ENCODE measurements at regions of chr4 and their contacts with region 1.

Region 1: GRCh38 chr4:11428899-11429698 is 405 bp upstream of the HS3ST1 start:
- DNase-seq: peak; percentile 72
- ATAC-seq: peak; percentile 90
- H3K4me3 Mint-ChIP-seq: peak overlapping the region; percentile 91
- H3K27ac Mint-ChIP-seq: peak overlapping the region; percentile 80
- H3K4me1 Mint-ChIP-seq: peaks cover 83% of the 10 kb centered on the region
- H3K27me3 Mint-ChIP-seq: peaks cover 2% of the 10 kb centered on the region
- CTCF ChIP-seq: no peak

Region 2: DNA sequence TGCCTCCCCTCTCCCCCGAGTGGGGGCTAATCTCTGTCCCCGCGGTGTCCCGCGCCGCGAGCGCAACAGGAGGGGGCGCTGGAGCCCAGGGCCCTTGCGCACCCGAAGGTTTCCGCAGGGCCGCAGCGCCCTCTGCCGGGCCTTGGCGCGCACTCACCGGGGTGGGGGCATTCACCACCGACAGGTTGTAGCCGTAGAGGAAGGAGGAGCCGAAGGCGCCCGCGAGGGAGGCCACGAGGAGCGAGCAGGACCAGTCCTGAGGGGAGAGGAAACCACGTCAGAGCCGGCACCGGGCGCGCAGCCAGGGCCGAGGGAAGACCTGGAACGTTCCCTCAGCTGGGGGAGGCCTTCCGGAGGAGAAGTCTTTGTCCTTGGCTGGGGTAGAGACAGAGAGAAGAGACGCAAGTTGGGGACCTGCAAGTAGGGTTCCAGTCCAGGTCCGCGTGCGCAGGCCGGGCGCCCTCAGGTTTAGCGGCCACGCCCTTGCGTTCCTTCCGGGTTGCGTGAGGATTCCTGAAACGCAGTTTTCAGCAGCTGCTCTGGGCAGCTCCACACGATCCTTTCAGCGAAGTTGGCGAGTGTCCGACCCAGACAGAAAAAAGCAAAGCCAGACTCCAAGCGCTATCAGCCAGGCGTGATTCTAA is 1410.2 kb before region 1 on chr4:
- CTCF ChIA-PET with region 1: no interaction called
- POLR2A ChIA-PET with region 1: no interaction called
- intact Hi-C with region 1: loop called (anchors 10 kb)
- DNase-seq: peak; percentile 85
- ATAC-seq: peak; percentile 99
- H3K4me3 Mint-ChIP-seq: peak overlapping the region; percentile 90
- H3K27ac Mint-ChIP-seq: peak overlapping the region; percentile 88
- H3K4me1 Mint-ChIP-seq: peaks cover 37% of the 10 kb centered on the region
- H3K27me3 Mint-ChIP-seq: no peaks in the 10 kb centered on the region
- CTCF ChIP-seq: peak; percentile 69

Region 3: GRCh38 chr4:10582059-10582686 is 846.9 kb before region 1 on chr4:
- CTCF ChIA-PET with region 1: interaction called, 21 read pairs
- POLR2A ChIA-PET with region 1: interaction called, 3 read pairs
- intact Hi-C with region 1: loop called (anchors 1 kb)
- DNase-seq: no peak
- ATAC-seq: no peak
- H3K4me3 Mint-ChIP-seq: no peak overlapping the region
- H3K27ac Mint-ChIP-seq: no peak overlapping the region
- H3K4me1 Mint-ChIP-seq: peaks cover 25% of the 10 kb centered on the region
- H3K27me3 Mint-ChIP-seq: no peaks in the 10 kb centered on the region
- CTCF ChIP-seq: no peak

Region 4: GRCh38 chr4:10730590-10730989 is 698.5 kb before region 1 on chr4:
- CTCF ChIA-PET with region 1: no interaction called
- POLR2A ChIA-PET with region 1: no interaction called
- intact Hi-C with region 1: loop called (anchors 5 kb)
- DNase-seq: no peak
- ATAC-seq: no peak
- H3K4me3 Mint-ChIP-seq: no peak overlapping the region
- H3K27ac Mint-ChIP-seq: no peak overlapping the region
- H3K4me1 Mint-ChIP-seq: peaks cover 65% of the 10 kb centered on the region
- H3K27me3 Mint-ChIP-seq: no peaks in the 10 kb centered on the region
- CTCF ChIP-seq: no peak

Region 5: GRCh38 chr4:11098461-11098860 is 330.6 kb before region 1 on chr4:
- CTCF ChIA-PET with region 1: no interaction called
- POLR2A ChIA-PET with region 1: no interaction called
- intact Hi-C with region 1: loop called (anchors 1 kb)
- DNase-seq: no peak
- ATAC-seq: peak; percentile 70
- H3K4me3 Mint-ChIP-seq: peak overlapping the region; percentile 57
- H3K27ac Mint-ChIP-seq: peak overlapping the region; percentile 68
- H3K4me1 Mint-ChIP-seq: peaks cover 73% of the 10 kb centered on the region
- H3K27me3 Mint-ChIP-seq: no peaks in the 10 kb centered on the region
- CTCF ChIP-seq: no peak

Region 6: GRCh38 chr4:11720292-11720691 is 291.2 kb after region 1 on chr4:
- CTCF ChIA-PET with region 1: no interaction called
- POLR2A ChIA-PET with region 1: no interaction called
- intact Hi-C with region 1: loop called (anchors 2 kb)
- DNase-seq: no peak
- ATAC-seq: no peak
- H3K4me3 Mint-ChIP-seq: no peak overlapping the region
- H3K27ac Mint-ChIP-seq: no peak overlapping the region
- H3K4me1 Mint-ChIP-seq: no peaks in the 10 kb centered on the region
- H3K27me3 Mint-ChIP-seq: peaks cover 2% of the 10 kb centered on the region
- CTCF ChIP-seq: no peak